Mucosa of descending colon (tissue), 3 donors: ENCODE measurements at regions of chr6 and their contacts with region 1.

Region 1: GRCh38 chr6:44172731-44173500 is 14.3 kb downstream of the CAPN11 start:
- DNase-seq: peak; percentile 76 to 94 (median 85)
- ATAC-seq: peak; percentile 88
- H3K4me3 ChIP-seq: no peak overlapping the region
- H3K4me1 ChIP-seq: peaks cover 8% of the 10 kb centered on the region
- CTCF ChIP-seq: peak; percentile 86

Region 2: DNA sequence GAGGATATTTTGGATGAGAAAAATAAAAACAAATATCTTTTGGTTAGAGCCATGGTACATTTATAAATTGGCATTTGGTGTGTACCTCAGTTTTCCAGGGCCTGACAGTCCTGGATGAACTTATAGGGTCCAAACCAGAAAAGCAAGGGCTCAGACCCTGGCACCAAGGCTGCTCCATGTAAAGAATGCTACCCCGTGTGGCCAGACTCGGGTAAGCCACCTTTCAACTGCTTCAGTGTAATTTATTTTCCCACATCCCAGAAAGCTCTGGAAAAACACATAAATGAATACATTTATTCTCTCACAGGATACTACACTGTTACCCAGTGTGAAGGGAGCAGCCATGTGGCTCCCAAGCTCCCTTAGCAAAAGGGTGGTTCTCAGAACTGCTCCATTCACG is 59.5 kb before region 1 on chr6:
- intact Hi-C with region 1: no loop called
- DNase-seq: no peak
- ATAC-seq: no peak
- H3K4me3 ChIP-seq: no peak overlapping the region
- H3K4me1 ChIP-seq: peaks cover 22% of the 10 kb centered on the region
- CTCF ChIP-seq: no peak

Region 3: GRCh38 chr6:44237813-44238433 is 65.0 kb after region 1 on chr6:
- intact Hi-C with region 1: loop called in 1 of 2 experiments (anchors 10 kb)
- DNase-seq: peak; percentile 84 to 89 (median 87)
- ATAC-seq: peak; percentile 84
- H3K4me3 ChIP-seq: peak overlapping the region; percentile 19
- H3K4me1 ChIP-seq: peaks cover 18% of the 10 kb centered on the region
- CTCF ChIP-seq: peak; percentile 95